Mammary epithelial cell (primary cell): ENCODE measurements at regions of chr12 and their contacts with region 1.

Region 1: DNA sequence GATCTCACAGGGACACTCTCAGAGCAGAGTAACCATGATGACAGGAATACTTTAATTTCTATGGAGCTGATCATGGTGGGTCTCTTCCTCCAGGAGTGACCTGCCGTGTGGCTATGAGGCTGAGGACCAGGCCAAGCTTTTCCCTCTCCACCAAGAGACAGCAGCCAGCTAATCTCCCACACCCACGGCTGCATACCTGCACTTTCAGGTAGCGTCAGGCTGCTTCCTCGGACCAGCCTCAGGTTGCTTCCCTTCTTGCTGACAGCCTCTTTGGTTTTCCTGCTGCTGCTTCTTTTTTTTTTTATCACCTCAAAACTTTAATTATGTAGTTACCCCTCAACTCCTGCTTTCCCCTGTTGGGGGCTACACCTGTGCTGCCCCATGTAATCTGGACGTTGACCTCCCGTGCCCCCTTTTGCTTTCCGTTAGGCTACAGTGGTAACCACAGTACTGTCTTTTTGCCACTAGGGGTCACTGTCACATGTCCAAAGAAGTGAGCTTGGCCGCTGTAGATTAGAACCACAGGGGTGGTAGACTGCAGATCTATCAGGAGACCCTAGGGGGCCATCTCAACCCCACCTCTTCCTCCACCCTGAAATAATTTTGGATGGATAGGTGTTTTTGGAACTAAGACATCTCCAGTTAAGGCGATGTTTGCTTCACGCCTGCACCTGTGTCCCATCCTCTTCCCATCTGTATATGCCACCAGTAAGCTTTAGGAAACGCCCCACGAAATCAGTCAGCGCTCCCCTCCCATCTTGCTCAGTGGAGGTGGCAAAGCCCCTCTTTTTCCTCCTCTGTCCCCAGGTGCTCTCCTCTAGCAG is 7.8 kb upstream of the PIP4K2C start:
- DNase-seq: peak; percentile 44
- H3K4me3 ChIP-seq: no peak overlapping the region
- H3K27ac ChIP-seq: no peak overlapping the region
- H3K4me1 ChIP-seq: no peaks in the 10 kb centered on the region
- H3K27me3 ChIP-seq: no peaks in the 10 kb centered on the region
- CTCF ChIP-seq: peak; percentile 93 to 95

Region 2: GRCh38 chr12:57604454-57604991 is 21.3 kb after region 1 on chr12 and contains the start of gene DTX3:
- CTCF ChIA-PET with region 1: interaction called, 16 read pairs
- dilution Hi-C with region 1: no loop called
- in situ Hi-C with region 1: no loop called
- intact Hi-C with region 1: no loop called
- DNase-seq: no peak
- H3K4me3 ChIP-seq: peak within 1 kb of the TSS; percentile 10 to 61 (median 34)
- H3K27ac ChIP-seq: no peak within 1 kb of the TSS
- H3K4me1 ChIP-seq: peaks cover 15% of the 10 kb centered on the region
- H3K27me3 ChIP-seq: no peaks in the 10 kb centered on the region
- CTCF ChIP-seq: no peak
- total RNA-seq, gene DTX3: 1.6 to 8.8 TPM

Region 3: GRCh38 chr12:57627501-57628279 is 44.5 kb after region 1 on chr12:
- CTCF ChIA-PET with region 1: interaction called, 4 read pairs
- dilution Hi-C with region 1: loop called (anchors 5 kb)
- in situ Hi-C with region 1: loop called in 1 of 2 experiments (anchors 5 kb)
- intact Hi-C with region 1: no loop called
- DNase-seq: no peak
- H3K4me3 ChIP-seq: no peak overlapping the region
- H3K27ac ChIP-seq: no peak overlapping the region
- H3K4me1 ChIP-seq: peaks cover 10% of the 10 kb centered on the region
- H3K27me3 ChIP-seq: no peaks in the 10 kb centered on the region
- CTCF ChIP-seq: no peak

Region 4: GRCh38 chr12:57641699-57642442 is 58.7 kb after region 1 on chr12:
- CTCF ChIA-PET with region 1: no interaction called
- dilution Hi-C with region 1: no loop called
- in situ Hi-C with region 1: no loop called
- intact Hi-C with region 1: no loop called
- DNase-seq: no peak
- H3K4me3 ChIP-seq: no peak overlapping the region
- H3K27ac ChIP-seq: no peak overlapping the region
- H3K4me1 ChIP-seq: no peaks in the 10 kb centered on the region
- H3K27me3 ChIP-seq: peaks cover 2% of the 10 kb centered on the region
- CTCF ChIP-seq: no peak

Region 5: GRCh38 chr12:57674691-57675090 is 91.5 kb after region 1 on chr12:
- CTCF ChIA-PET with region 1: no interaction called
- dilution Hi-C with region 1: loop called (anchors 5 kb)
- in situ Hi-C with region 1: no loop called
- intact Hi-C with region 1: no loop called
- DNase-seq: no peak
- H3K4me3 ChIP-seq: no peak overlapping the region
- H3K27ac ChIP-seq: no peak overlapping the region
- H3K4me1 ChIP-seq: no peaks in the 10 kb centered on the region
- H3K27me3 ChIP-seq: no peaks in the 10 kb centered on the region
- CTCF ChIP-seq: no peak

Region 6: DNA sequence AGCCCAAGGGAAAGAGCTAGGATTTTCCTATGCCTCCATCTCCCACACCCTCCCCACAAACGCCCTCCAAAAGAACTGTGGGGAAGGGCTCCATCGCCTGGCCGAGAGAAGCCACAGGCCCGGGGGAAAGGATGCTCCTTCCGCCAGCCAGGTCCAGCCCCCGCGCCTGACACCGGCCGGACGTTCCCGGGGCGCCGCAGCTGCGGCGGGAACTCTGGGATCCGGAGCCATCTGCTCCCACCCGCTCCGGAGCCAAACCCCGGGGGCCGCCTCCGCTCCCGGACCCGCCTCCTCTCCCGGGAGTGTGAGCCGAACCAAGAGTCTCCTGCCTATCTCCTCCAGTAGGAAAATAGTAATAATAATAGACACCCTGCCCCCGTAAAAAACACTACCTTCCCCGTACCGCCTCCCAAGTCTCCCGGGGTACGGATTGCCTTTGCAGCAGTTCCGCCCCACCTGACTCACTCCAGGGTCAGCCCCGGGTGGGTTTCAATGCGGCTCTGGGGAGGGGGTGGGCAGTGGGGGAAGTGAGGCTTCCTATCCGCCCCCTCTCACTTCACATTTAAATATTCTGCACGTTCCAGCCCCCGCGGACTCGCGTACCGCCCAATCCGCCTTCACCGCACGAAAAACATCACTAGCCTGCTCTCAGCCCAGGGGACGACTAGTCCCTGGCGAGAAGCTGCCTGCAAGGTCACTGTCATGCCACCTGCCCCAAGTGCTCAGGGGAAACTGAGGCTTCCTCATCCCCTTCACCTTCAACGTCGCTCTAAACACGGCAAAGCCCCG is 152.9 kb after region 1 on chr12:
- CTCF ChIA-PET with region 1: no interaction called
- dilution Hi-C with region 1: no loop called
- in situ Hi-C with region 1: no loop called
- intact Hi-C with region 1: loop called (anchors 1 kb)
- DNase-seq: peak; percentile 37
- H3K4me3 ChIP-seq: peak overlapping the region; percentile 9 to 27 (median 11)
- H3K27ac ChIP-seq: no peak overlapping the region
- H3K4me1 ChIP-seq: peaks cover 24% of the 10 kb centered on the region
- H3K27me3 ChIP-seq: peaks cover 22% of the 10 kb centered on the region
- CTCF ChIP-seq: peak; percentile 26 to 46

Region 7: DNA sequence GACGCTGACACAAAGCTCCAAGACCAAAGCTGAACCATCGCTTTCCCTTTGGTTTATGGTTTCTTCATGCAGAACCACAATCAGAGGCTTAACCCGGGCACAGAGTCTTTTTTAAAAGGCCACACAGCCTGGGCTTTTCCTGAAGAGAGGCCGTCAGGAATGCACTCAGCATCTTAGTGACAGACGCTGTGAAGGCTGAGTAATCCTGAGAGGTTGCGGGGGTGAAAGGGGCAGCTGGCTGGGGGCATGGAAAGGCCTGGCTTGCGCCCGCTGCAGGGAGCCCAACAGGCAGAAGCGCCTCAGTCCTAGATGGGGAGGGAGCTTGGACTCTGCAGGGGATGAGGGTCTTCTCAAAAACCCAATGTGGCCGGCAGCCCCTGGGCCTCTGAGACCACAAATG is 249.7 kb after region 1 on chr12:
- CTCF ChIA-PET with region 1: no interaction called
- dilution Hi-C with region 1: no loop called
- in situ Hi-C with region 1: no loop called
- intact Hi-C with region 1: no loop called
- DNase-seq: no peak
- H3K4me3 ChIP-seq: no peak overlapping the region
- H3K27ac ChIP-seq: no peak overlapping the region
- H3K4me1 ChIP-seq: peaks cover 28% of the 10 kb centered on the region
- H3K27me3 ChIP-seq: no peaks in the 10 kb centered on the region
- CTCF ChIP-seq: no peak